ENCODE measurements at regions of chr2 and their contacts with region 1.

Region 1: GRCh38 chr2:227471924-227472264 is at the start of gene AGFG1:
- DNase-seq: peak; percentile 76
- ATAC-seq: peak; percentile 81
- H3K4me3 ChIP-seq: peak within 1 kb of the TSS; percentile 94 to 98 (median 97)
- H3K27ac ChIP-seq: peak within 1 kb of the TSS; percentile 81
- H3K4me1 ChIP-seq: peaks cover 56% of the 10 kb centered on the region
- H3K27me3 ChIP-seq: no peaks in the 10 kb centered on the region; a peak in 1 of 5 replicates
- CTCF ChIP-seq: peak; percentile 95
- EP300 ChIP-seq: 0 out of 4 replicates have a peak, but pooled peaks of 1 of the 2 experiments have one; percentile 24
- POLR2A ChIP-seq: peak; percentile 63 to 76; a peak in 3 of 4 replicates
- RAD21 ChIP-seq: peak; percentile 83
- total RNA-seq, gene AGFG1: 145 and 187 TPM in 2 replicates

Region 2: GRCh38 chr2:227347117-227347516 is 124.8 kb before region 1 on chr2:
- CTCF ChIA-PET with region 1: no interaction called
- POLR2A ChIA-PET with region 1: no interaction called
- in situ Hi-C with region 1: no loop called
- intact Hi-C with region 1: loop called (anchors 10 kb)
- DNase-seq: no peak
- ATAC-seq: peak; percentile 50; the same call in 2 of the 3 replicates
- H3K4me3 ChIP-seq: no peak overlapping the region
- H3K27ac ChIP-seq: no peak overlapping the region
- H3K4me1 ChIP-seq: no peaks in the 10 kb centered on the region
- H3K27me3 ChIP-seq: no peaks in the 10 kb centered on the region
- CTCF ChIP-seq: no peak
- EP300 ChIP-seq: no peak
- POLR2A ChIP-seq: no peak
- RAD21 ChIP-seq: no peak

Region 3: DNA sequence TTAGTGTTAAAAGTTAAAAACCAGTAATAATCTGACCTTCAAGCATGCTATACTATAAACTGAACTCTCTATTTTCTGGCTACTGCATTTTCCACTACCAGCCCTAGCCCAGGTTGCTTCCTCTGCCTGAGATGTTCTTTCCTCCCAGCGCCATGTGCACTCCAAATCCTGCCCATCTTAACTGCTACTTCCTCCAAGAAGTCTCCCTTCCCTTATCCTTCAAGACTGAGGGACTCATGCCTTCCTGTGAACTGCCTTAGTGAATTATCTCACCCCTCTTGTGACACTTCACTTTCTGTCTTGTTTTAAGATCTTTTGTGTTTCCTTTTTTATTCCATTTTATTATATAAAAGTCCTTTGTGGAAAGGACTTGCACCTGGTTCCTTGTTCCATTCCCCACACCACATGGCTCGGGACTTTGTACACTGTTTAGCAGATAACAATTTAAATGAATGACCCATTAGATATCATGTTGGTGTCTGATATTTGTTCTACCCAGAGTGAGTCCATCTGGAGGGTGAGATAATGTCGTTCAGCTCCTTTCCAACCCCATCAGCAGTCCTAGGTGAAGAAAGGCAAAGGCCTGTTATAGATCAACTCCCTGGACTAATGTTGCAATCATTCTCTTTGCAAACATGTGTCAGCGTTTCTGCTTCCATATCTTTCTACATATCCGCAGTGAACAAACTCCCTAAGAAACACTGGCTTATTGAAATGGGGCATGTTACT is 20.8 kb before region 1 on chr2:
- CTCF ChIA-PET with region 1: no interaction called
- POLR2A ChIA-PET with region 1: interaction called, 33 read pairs
- in situ Hi-C with region 1: no loop called
- intact Hi-C with region 1: loop called (anchors 1 kb)
- DNase-seq: peak; percentile 99
- ATAC-seq: peak; percentile 93
- H3K4me3 ChIP-seq: peak overlapping the region in 1 of 3 experiments; percentile 17; a peak in 1 of 6 replicates
- H3K27ac ChIP-seq: peak overlapping the region; percentile 90
- H3K4me1 ChIP-seq: peaks cover 84% of the 10 kb centered on the region
- H3K27me3 ChIP-seq: no peaks in the 10 kb centered on the region
- CTCF ChIP-seq: no peak
- EP300 ChIP-seq: peak; percentile 92 to 98
- POLR2A ChIP-seq: peak in 1 of 2 experiments; percentile 50; a peak in 1 of 4 replicates
- RAD21 ChIP-seq: no peak; the same call in 1 of the 2 replicates

Region 4: DNA sequence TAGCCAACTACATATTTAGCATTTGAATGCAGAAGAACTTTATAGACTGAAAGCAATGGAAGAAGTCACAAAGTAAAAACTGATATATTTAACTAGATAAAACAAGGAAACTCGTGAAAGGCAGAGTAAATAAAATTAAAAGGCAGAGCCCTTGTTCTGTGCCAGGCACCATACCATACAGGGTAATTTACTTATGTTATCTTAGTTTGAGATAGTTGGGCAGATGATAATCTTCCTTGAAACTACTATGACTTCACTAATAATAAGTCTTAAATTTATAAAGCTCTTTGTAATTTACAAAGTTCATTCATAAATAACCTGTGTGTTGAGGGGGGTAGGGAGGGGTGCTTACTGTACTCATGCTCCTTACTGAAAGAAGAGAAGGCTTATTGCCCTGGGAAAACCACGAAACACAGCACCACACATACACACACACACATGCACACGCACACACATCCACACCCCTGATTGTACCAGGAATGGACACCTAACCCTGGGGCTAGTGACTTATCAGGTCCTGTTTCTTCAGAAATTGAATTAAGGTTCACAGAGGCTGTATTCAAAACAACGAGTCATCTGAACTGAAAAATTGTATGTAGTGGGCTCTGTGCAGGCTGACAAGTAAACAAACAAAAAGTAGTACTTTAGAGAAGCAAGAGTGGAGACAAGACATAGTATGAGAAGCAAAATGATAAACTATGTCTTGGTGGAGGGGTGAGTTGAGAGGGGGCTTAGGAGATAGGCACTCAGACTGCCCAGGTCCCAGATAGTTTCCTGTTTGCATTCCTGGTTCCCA is 38.1 kb after region 1 on chr2:
- CTCF ChIA-PET with region 1: interaction called, 3 read pairs
- POLR2A ChIA-PET with region 1: interaction called, 4 read pairs
- in situ Hi-C with region 1: no loop called
- intact Hi-C with region 1: loop called (anchors 5 kb)
- DNase-seq: peak; percentile 18
- ATAC-seq: peak; percentile 26
- H3K4me3 ChIP-seq: no peak overlapping the region
- H3K27ac ChIP-seq: peak overlapping the region; percentile 9
- H3K4me1 ChIP-seq: peaks cover 35% of the 10 kb centered on the region
- H3K27me3 ChIP-seq: no peaks in the 10 kb centered on the region
- CTCF ChIP-seq: no peak
- EP300 ChIP-seq: no peak
- POLR2A ChIP-seq: no peak
- RAD21 ChIP-seq: no peak

Region 5: DNA sequence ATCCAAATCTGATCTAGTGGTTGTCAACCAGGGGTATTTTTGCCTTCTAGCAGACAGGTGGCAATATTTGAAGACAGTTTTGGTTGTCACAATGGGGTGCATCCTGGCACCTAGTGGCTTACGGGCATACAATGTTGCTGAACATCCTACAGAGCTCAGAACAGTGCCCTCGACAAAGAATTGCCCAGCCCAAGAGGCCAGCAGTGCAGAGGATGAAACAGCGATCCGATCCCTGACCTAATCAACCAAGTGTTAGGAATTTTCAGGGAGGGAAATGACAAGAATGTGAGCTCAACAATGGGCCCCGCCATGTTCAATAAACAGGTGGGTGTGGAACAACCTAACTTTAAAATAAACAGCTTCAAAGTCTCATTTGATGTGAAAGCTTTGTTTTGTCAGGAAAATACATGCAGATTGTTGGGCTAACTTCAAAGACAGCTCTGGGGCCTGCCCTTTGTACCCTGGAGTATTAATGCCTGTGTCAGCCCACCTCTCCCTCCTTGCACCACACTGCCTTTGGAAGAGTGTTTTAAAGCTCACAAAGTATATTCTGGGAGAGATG is 172.2 kb after region 1 on chr2:
- CTCF ChIA-PET with region 1: no interaction called
- POLR2A ChIA-PET with region 1: no interaction called
- in situ Hi-C with region 1: no loop called
- intact Hi-C with region 1: loop called (anchors 1 kb)
- DNase-seq: peak; percentile 98
- ATAC-seq: peak; percentile 95
- H3K4me3 ChIP-seq: peak overlapping the region in 1 of 3 experiments; percentile 18; a peak in 1 of 6 replicates
- H3K27ac ChIP-seq: peak overlapping the region; percentile 61
- H3K4me1 ChIP-seq: peaks cover 38% of the 10 kb centered on the region
- H3K27me3 ChIP-seq: no peaks in the 10 kb centered on the region
- CTCF ChIP-seq: peak; percentile 26; the same call in 1 of the 2 replicates
- EP300 ChIP-seq: peak; percentile 60 to 96; a peak in 3 of 4 replicates
- POLR2A ChIP-seq: no peak
- RAD21 ChIP-seq: peak; percentile 30